ENCODE measurements at regions of chr2 and their contacts with region 1.

Region 1: GRCh38 chr2:25197336-25198208 is 29.2 kb upstream of the POMC start:
- DNase-seq: no peak

Region 2: DNA sequence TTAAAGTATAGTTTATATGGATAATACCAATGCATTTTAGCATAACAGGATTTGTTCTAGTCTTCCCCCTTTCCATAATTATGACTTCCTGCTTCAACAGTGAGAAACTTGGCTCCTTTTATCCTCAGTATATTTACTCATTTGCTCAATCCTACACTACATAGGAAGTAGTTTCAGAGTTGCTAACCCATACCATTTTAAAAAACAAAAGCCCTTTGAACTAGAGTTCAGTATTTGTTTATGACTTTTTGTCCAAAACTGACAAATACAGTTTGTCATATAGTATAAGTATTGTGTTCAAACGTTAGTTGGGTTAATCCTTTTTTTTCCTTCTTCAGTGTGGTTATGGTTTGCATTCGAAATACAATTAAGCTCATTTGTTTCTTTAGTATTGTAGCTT is 219.9 kb before region 1 on chr2:
- intact Hi-C with region 1: loop called (anchors 5 kb)
- DNase-seq: no peak

Region 3: GRCh38 chr2:25165992-25166875 is 31.3 kb before region 1 on chr2:
- intact Hi-C with region 1: no loop called
- DNase-seq: peak; percentile 39

Region 4: GRCh38 chr2:25251422-25252273 is 54.1 kb after region 1 on chr2:
- intact Hi-C with region 1: no loop called
- DNase-seq: peak; percentile 82

Measured in cardiac septum (tissue), 1 donor.